ENCODE measurements at regions of chr4 and their contacts with region 1.

Region 1: GRCh38 chr4:17027495-17027894 is 129.1 kb upstream of the LDB2 start:
- DNase-seq: no peak
- ATAC-seq: peak in 4 of 8 donors; percentile 18 to 79 (median 49)
- H3K4me3 ChIP-seq: no peak overlapping the region
- H3K27ac ChIP-seq: no peak overlapping the region
- H3K4me1 ChIP-seq: peaks cover 0 to 14% (median 0%) of the 10 kb centered on the region in 9 donors
- H3K27me3 ChIP-seq: no peaks in the 10 kb centered on the region
- CTCF ChIP-seq: no peak

Region 2: DNA sequence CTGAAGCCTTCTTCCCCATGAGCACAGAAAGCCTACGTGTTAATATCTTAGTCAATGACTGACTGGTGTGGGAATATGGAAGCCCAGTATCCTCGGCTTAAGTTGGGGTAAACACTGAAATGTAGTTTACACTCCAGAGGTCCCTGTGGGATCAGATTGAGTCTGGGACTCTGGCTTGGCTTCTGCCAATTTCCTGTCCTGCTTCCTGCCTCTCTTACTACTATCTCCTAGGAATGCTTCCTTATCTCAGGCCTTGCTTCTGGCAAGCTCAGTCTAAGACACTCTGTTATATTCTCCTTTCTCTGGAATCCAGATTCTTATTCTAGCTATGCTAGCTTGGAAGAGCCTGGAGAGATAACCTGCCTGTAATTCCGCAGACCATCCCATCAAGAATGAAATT is 45.0 kb after region 1 on chr4:
- intact Hi-C with region 1: loop called in 1 of 10 experiments (anchors 5 kb)
- DNase-seq: peak in 1 of 2 donors; percentile 11
- ATAC-seq: peak in 7 of 8 donors; percentile 38 to 86 (median 58)
- H3K4me3 ChIP-seq: no peak overlapping the region
- H3K27ac ChIP-seq: peak overlapping the region in 1 of 10 donors; percentile 20
- H3K4me1 ChIP-seq: peaks cover 0 to 13% (median 9%) of the 10 kb centered on the region in 9 donors
- H3K27me3 ChIP-seq: no peaks in the 10 kb centered on the region
- CTCF ChIP-seq: no peak

Measured in heart right ventricle (tissue), 16 donors.